Prostate gland (tissue), 2 donors: ENCODE measurements at regions of chr9 and their contacts with region 1.

Region 1: DNA sequence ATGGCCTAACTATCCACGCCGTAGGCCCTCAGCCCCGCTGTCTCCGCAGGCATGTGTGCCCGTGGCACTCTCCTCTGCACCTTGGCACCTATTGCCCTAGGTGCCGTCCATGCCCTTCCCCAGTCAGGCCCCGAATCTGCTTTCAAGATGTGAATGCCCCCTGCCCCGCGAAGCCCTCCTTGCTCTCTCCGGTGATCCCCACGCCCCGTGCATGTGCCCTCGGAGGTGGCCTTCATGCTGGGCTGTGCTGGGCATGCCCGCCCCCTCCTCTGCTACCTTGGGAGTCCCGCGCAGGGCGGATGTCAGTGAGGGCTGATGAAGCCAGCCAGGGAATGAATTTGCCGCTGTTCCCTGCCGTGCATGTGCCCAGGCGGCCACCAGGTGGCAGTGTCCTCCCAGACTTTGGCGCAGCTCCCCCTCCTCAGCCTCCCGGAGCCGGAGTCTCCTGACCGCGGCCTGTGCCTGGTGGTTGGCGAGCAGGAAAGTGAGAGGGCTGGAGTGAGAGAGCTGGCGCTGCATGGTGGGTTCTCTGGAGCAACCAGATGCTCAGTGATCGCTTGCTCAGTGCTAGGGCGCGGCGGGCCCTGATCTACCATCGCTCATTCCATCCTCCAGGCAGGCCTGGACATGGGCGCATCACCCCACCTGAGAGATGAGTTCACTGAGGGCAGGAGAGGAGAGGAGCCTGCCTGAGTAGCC is 112.9 kb upstream of the LMX1B start:
- DNase-seq: peak; percentile 62
- H3K4me3 ChIP-seq: no peak overlapping the region
- H3K27ac ChIP-seq: no peak overlapping the region
- H3K4me1 ChIP-seq: peaks cover 5% of the 10 kb centered on the region
- H3K27me3 ChIP-seq: no peaks in the 10 kb centered on the region
- CTCF ChIP-seq: peak; percentile 87 to 98 (median 94)
- POLR2A ChIP-seq: no peak

Region 2: DNA sequence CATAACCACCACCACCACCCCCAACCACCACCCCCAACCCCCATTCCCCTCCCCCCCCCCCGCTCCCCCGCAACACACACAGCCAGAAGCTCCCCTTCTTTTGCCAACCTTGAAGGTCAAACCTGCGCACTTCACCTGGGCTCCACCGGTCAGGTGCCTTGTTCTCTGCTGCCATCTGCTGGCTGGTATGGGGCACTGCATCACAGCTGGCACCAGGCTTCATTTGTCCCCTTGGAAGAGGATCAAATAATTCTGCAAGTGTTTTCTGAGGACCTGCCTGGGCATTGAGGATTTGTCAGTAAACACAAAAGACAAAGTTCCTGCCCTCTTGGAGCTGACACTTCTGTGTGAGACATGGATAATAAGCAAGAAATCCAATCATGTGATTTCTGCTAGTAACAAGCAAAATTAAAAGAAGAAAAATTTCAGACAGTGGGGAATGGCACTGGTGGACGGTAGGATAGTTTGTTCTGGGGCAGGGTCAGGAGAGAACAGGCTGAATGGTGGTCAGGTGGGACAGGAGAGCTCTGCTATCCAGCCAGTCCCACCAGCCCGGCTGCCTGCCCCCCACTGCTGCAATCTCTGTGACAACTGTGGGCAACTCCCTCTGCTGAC is 57.3 kb after region 1 on chr9:
- intact Hi-C with region 1: loop called (anchors 2 kb)
- DNase-seq: peak; percentile 49
- H3K4me3 ChIP-seq: no peak overlapping the region
- H3K27ac ChIP-seq: no peak overlapping the region
- H3K4me1 ChIP-seq: no peaks in the 10 kb centered on the region
- H3K27me3 ChIP-seq: no peaks in the 10 kb centered on the region
- CTCF ChIP-seq: peak; percentile 87 to 93 (median 92)
- POLR2A ChIP-seq: no peak

Region 3: GRCh38 chr9:126611592-126612325 is 110.9 kb after region 1 on chr9:
- intact Hi-C with region 1: loop called (anchors 10 kb)
- DNase-seq: peak; percentile 56
- H3K4me3 ChIP-seq: no peak overlapping the region
- H3K27ac ChIP-seq: no peak overlapping the region
- H3K4me1 ChIP-seq: peaks cover 3% of the 10 kb centered on the region
- H3K27me3 ChIP-seq: peaks cover 40% of the 10 kb centered on the region
- CTCF ChIP-seq: peak; percentile 71 to 86 (median 80)
- POLR2A ChIP-seq: no peak

Region 4: DNA sequence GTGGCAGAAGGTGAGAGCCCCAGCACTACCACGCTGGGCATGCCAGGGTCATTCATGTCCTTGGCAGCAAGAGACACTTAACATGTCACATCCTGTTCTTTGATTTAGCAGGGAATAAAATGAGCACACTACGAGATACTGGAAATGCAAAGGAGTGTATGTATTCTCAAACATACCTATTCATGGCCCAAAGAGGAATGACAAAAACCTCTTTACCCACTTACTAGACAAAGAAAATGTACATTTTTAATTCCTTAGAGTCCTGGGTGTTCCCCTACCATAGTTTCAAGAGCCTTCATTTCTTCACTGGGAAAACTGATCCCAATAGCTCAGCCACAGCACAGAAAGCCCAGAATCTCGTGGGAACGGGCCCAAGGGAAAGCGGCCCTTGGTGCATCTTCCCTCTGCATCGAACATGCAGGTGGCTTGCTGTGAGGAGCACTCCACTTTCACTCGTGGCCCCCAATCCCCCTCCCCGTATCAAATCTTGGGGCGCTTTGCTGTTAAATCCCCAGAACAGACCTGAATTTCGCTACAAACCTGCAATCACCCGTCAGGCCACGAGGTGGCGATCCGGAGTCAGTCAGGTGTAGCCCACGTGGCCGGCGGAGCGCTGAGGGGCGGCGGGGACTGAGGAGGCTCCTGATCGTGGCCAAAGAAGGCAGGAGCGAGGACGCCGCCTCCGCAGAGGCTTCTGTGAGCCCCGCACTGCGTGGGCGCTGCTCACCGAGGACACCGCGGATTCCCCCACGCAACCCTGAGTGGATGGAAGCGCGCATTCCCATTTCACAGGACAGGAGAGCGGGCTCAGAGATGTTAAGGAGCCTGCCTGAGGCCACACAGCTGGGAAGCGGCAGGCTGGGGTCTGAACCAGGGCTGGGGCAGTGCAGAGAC is 204.3 kb after region 1 on chr9:
- intact Hi-C with region 1: loop called (anchors 10 kb)
- DNase-seq: peak; percentile 79
- H3K4me3 ChIP-seq: no peak overlapping the region
- H3K27ac ChIP-seq: no peak overlapping the region
- H3K4me1 ChIP-seq: no peaks in the 10 kb centered on the region
- H3K27me3 ChIP-seq: no peaks in the 10 kb centered on the region
- CTCF ChIP-seq: peak; percentile 89 to 96 (median 93)
- POLR2A ChIP-seq: no peak

Region 5: DNA sequence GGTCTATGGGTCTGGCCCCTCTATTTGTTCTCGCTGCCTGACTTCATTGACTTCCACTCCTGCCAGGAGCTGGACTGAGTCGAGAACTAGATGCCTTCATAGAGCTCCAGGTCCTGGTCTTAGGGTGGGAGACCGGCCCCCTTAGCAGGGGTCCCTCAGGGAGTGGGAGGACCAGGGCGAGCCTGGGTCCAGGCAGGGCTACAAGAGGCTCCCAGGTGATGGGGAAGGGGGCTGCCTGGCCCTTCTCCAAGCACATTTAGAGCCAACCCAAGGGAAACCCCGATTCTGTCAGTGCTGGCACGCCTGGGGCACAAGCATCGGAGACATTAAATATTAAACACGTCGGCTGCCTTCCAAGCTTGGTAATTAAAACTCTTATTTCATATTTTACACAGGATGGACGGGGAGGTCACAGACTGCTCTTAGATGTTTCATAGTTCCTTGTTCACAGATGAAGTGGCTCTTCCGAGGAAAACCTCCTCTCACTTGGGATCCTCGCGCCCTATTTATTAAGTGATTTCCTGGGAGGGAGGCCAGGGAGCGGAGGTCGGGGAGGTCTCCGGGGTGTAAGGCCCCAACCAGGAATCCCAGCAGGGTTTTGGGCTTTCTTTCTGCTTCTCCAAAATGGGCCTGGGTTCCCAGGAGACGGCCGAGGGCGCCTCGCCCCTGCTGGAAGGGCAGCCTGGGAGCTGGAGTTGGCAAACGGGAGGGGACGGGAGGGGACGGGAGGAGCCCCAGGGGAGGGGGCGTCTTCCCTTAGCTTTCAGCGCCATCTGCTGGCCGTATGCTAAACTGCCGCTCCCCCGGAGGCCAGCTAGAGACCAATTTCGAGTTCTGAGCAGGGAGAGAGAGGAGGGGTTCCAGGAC is 280.6 kb after region 1 on chr9:
- intact Hi-C with region 1: loop called (anchors 5 kb)
- DNase-seq: peak; percentile 76
- H3K4me3 ChIP-seq: no peak overlapping the region
- H3K27ac ChIP-seq: no peak overlapping the region
- H3K4me1 ChIP-seq: no peaks in the 10 kb centered on the region
- H3K27me3 ChIP-seq: peaks cover 4% of the 10 kb centered on the region
- CTCF ChIP-seq: peak; percentile 91 to 94 (median 92)
- POLR2A ChIP-seq: no peak